Posterior vena cava (tissue), 2 donors: ENCODE measurements at regions of chr7 and their contacts with region 1.

Region 1: GRCh38 chr7:77315182-77315591 is 101.0 kb downstream of the GSAP start:
- DNase-seq: no peak

Region 2: DNA sequence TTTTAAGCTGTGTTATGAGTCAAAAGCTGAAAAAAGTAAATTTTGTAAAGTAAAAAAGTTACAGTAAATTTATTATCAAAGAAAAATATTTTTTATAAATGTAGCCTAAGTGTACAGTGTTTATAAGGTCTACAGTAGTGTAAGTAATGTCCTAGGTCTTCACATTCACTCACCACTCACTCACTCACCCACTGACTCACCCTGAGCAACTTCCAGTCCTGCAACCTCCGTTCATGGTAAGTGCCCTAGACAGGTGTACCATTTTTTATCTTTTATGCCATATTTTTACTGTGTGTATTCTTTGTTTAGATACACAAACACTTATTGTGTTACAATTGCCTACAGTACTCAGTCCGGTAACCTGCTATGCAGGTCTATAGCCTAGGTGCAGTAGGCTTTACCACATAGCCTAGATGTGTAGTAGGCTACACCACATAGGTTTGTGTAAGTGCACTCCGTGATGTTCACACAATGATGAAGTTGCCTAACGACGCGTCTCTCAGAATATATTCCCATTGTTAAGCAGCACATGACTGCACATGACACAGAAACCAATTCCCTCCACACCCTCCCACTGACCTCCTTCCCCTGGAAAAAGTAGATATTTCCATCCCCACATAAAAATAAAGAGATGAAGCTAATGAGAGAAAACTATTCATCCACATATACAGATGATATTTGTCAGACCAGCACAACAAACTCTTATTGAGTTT is 70.8 kb before region 1 on chr7:
- intact Hi-C with region 1: loop called in 1 of 2 experiments (anchors 5 kb)
- DNase-seq: no peak

Region 3: GRCh38 chr7:77331938-77332695 is 16.9 kb after region 1 on chr7:
- intact Hi-C with region 1: no loop called
- DNase-seq: no peak

Region 4: DNA sequence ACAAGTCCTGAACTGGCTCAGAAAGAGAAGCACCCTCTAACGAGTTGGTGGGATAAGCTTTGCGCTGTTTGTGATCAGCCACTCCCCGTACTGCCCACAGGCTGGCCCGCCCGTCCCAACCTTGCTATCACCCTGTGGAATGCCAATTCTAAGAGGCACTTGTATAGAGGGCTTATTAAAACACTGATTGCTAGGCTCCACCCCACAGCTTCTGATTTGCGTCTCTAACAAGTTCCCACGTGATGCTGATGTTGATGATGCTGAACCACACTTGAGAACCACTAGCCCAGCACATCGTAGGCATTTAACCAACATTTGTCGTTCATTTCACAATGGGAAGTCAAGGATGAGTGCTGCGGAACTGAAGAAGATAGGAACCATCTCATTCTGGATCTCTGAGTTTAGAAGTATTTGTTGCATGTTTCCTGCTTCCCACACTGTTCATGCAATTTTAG is 113.6 kb after region 1 on chr7:
- intact Hi-C with region 1: no loop called
- DNase-seq: no peak